Right lobe of liver (tissue), 6 donors: ENCODE measurements at regions of chr4 and their contacts with region 1.

Region 1: DNA sequence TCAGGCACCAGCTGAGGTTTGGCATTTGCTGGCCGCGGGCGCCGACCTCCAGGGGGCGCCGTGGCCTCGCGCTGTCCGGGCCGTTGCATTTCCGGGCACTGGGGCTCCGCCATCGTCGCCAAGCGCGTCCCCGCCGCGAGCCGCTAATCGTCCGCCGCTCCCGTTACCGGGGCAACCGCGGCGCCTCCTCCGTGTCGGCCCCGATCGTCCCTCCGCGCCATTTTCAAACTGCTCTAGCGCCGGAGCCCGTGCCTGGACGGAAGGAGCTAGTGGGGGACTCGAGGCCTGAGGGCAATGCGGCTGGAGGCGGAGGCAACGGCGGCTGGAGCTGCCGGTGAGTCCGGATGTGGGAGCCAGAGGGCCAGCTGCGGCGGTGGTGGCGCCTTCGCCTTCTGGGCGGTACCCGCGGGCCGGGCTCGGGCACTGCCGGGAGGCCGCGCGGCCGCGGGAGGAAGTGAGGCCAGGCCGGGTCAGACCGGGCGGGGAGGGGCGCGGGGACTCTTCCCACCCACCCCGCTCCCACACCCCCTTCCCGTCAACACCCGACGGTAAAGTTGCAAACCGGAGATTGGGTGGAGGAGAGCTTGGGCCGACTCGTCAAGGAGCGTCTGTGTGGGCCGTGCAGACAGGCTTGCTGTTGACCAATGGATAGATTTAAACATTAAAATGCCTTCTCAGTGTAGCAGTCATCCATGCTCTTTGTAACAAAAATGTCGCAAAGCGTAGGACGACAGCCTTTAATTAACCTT is at the start of gene CEP135:
- DNase-seq: peak; percentile 97 to 98 (median 97)
- ATAC-seq: peak; percentile 94 to 97 (median 96)
- H3K4me3 ChIP-seq: peak within 1 kb of the TSS; percentile 67 to 97 (median 96)
- H3K27ac ChIP-seq: peak within 1 kb of the TSS; percentile 70 to 82 (median 78)
- H3K4me1 ChIP-seq: no peaks in the 10 kb centered on the region
- H3K27me3 ChIP-seq: no peaks in the 10 kb centered on the region
- CTCF ChIP-seq: peak; percentile 95 to 99 (median 97)
- POLR2A ChIP-seq: peak; percentile 53
- total RNA-seq, gene CEP135: 0.59 to 2.4 (median 1.7) TPM

Region 2: GRCh38 chr4:55706541-55706940 is 242.4 kb before region 1 on chr4:
- intact Hi-C with region 1: no loop called
- DNase-seq: no peak
- ATAC-seq: no peak
- H3K4me3 ChIP-seq: no peak overlapping the region
- H3K27ac ChIP-seq: no peak overlapping the region
- H3K4me1 ChIP-seq: no peaks in the 10 kb centered on the region
- H3K27me3 ChIP-seq: no peaks in the 10 kb centered on the region
- CTCF ChIP-seq: no peak
- POLR2A ChIP-seq: no peak

Region 3: DNA sequence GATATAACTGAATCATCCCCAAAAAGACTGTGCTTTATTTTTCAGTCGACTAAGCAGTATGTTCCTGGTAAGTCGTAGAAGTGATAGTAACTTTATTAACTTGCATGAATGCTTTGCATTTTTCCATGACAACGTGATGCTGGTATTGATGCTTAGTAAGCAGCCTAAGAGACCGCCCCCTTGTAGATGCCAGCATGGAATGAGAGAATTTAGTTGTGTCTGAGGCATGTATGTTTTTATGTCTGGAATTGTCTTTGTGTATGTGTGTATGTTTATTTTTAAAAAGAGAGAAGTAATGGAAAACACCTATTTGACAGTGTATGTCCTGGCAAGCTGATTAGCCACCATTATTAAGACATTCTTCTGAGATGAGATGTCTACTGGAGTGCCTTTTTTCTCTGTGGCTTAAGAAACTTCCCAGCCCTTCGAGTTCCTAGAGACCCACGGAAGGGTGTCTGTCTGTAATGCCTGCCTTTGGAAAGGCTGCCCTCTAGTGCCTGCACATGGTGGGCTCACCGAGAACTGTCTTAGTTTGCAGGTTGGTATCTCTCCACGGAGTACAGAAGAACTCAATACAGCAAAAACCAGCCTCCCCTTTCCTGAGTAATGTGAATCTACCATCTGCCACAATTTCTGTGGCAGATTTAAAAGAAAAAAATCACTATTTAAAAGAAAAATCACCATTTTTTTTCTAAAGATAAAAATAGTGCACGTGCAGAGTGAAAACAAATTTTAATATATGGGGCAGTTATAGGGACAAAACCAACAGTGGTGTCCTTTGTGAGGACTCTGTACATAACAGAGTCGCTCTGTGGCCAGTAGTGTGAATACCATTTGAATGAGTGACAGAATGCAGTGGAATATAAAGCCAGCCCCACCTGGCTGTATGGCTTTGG is 352.5 kb after region 1 on chr4:
- intact Hi-C with region 1: loop called in 1 of 2 experiments (anchors 10 kb)
- DNase-seq: peak; percentile 63 to 73 (median 68)
- ATAC-seq: peak; percentile 98 to 100 (median 99)
- H3K4me3 ChIP-seq: no peak overlapping the region
- H3K27ac ChIP-seq: no peak overlapping the region
- H3K4me1 ChIP-seq: no peaks in the 10 kb centered on the region
- H3K27me3 ChIP-seq: no peaks in the 10 kb centered on the region
- CTCF ChIP-seq: peak; percentile 73 to 92 (median 90)
- POLR2A ChIP-seq: no peak

Region 4: DNA sequence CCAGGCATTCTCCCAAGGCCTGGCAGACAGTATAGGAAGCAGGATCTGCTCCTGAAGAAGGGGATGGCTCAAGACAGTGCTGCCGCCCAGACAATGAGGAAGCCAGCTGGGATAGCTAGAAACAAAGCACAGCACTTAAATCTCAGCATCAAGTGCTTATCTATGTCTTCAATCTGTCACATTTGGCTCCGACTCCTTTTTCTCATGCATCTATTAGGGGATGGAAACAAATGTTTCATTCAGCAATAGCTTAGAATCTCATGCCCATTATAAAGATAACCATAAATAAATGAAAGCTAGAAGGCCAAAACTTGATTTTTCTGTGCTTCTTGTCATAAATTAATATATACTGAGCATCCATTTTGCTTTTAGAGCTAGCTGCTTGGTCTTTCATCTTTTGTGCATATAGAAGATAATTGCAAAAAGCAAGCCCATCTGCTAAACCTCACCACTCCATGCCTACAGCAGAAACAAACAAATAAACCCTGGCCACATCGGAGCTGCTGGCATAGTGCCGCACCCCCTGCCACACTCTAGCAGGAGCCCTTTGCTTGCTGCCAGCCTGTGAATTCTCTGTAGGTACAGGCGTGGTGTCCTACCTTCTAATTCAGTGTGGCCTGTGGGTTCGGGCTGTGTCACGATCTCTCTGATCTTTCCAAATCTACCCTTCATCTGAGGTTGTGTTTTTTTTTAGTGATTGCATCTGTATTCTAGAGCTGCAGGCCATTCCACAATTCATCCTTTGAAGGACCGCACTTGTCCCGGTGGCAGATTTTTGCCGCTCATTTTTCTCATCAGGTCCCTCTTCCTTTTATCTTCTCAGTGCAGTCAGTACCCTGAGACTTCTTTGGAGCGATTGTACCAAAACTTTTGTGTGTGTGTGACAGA is 362.6 kb after region 1 on chr4:
- intact Hi-C with region 1: loop called (anchors 10 kb)
- DNase-seq: no peak
- ATAC-seq: no peak
- H3K4me3 ChIP-seq: no peak overlapping the region
- H3K27ac ChIP-seq: no peak overlapping the region
- H3K4me1 ChIP-seq: no peaks in the 10 kb centered on the region
- H3K27me3 ChIP-seq: no peaks in the 10 kb centered on the region
- CTCF ChIP-seq: no peak
- POLR2A ChIP-seq: no peak